Mammary epithelial cell (primary cell): ENCODE measurements at regions of chr15 and their contacts with region 1.

Region 1: GRCh38 chr15:73633111-73633990 is at the start of gene NPTN:
- DNase-seq: peak; percentile 98
- H3K4me3 ChIP-seq: peak within 1 kb of the TSS; percentile 59 to 78 (median 74)
- H3K27ac ChIP-seq: peak within 1 kb of the TSS; percentile 96
- H3K4me1 ChIP-seq: peaks cover 58% of the 10 kb centered on the region
- H3K27me3 ChIP-seq: no peaks in the 10 kb centered on the region
- CTCF ChIP-seq: no peak
- total RNA-seq, gene NPTN: 118 to 143 TPM

Region 2: GRCh38 chr15:73305331-73306211 is 327.8 kb before region 1 on chr15:
- CTCF ChIA-PET with region 1: no interaction called
- dilution Hi-C with region 1: no loop called
- in situ Hi-C with region 1: no loop called
- intact Hi-C with region 1: loop called (anchors 1 kb)
- DNase-seq: peak; percentile 75
- H3K4me3 ChIP-seq: no peak overlapping the region
- H3K27ac ChIP-seq: no peak overlapping the region
- H3K4me1 ChIP-seq: peaks cover 7% of the 10 kb centered on the region
- H3K27me3 ChIP-seq: no peaks in the 10 kb centered on the region
- CTCF ChIP-seq: peak; percentile 77 to 83

Region 3: DNA sequence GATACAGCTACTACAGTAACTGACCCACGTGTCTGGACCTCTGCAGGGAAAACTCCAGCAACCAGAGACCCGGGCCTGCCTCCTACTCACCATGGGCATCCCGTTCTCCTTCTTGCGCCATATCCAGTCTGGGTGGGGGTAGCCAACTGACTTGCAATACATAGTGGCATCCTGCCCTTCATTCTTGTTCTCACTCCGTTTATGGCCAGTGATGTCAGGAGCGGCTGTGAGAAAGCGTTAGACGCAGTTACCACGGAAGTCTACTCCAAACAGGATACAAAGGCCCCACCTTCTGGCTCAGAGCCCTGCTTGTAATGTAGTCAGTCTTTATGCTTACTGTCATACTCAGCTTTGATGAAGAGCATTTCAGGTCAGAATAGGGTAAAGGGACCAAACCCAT is 59.8 kb before region 1 on chr15:
- CTCF ChIA-PET with region 1: interaction called, 8 read pairs
- dilution Hi-C with region 1: no loop called
- in situ Hi-C with region 1: loop called in 1 of 2 experiments (anchors 10 kb)
- intact Hi-C with region 1: loop called (anchors 5 kb)
- DNase-seq: peak; percentile 64
- H3K4me3 ChIP-seq: no peak overlapping the region
- H3K27ac ChIP-seq: no peak overlapping the region
- H3K4me1 ChIP-seq: peaks cover 48% of the 10 kb centered on the region
- H3K27me3 ChIP-seq: no peaks in the 10 kb centered on the region
- CTCF ChIP-seq: no peak

Region 4: GRCh38 chr15:73589766-73590165 is 43.6 kb before region 1 on chr15:
- CTCF ChIA-PET with region 1: no interaction called
- dilution Hi-C with region 1: no loop called
- in situ Hi-C with region 1: no loop called
- intact Hi-C with region 1: no loop called
- DNase-seq: no peak
- H3K4me3 ChIP-seq: no peak overlapping the region
- H3K27ac ChIP-seq: no peak overlapping the region
- H3K4me1 ChIP-seq: no peaks in the 10 kb centered on the region
- H3K27me3 ChIP-seq: no peaks in the 10 kb centered on the region
- CTCF ChIP-seq: no peak

Region 5: DNA sequence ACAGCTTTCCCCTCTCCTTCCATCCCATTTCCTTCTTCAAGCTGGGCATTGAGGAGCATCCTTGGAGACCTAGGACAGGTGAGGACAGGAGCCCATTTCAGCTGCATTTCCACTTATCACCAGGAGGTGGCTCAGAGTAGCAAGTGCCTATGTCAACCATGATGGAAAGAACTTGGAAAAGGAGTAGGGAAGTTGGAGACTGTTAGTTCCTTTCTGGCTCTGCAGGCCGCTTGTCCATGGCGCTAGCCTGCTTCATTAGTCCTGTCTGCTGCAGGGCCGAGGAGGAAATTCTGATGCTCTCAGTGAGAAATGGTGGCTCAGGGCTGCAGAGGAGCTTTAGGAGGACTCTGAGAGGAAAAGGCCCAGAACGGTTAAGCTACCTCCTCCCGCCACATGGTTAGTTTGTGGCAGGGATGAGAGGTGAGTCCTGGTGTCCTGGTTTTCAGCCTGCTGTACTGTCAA is 43.8 kb after region 1 on chr15:
- CTCF ChIA-PET with region 1: no interaction called
- dilution Hi-C with region 1: no loop called
- in situ Hi-C with region 1: no loop called
- intact Hi-C with region 1: loop called (anchors 1 kb)
- DNase-seq: peak; percentile 55
- H3K4me3 ChIP-seq: no peak overlapping the region
- H3K27ac ChIP-seq: no peak overlapping the region
- H3K4me1 ChIP-seq: no peaks in the 10 kb centered on the region
- H3K27me3 ChIP-seq: no peaks in the 10 kb centered on the region
- CTCF ChIP-seq: peak; percentile 88 to 89

Region 6: DNA sequence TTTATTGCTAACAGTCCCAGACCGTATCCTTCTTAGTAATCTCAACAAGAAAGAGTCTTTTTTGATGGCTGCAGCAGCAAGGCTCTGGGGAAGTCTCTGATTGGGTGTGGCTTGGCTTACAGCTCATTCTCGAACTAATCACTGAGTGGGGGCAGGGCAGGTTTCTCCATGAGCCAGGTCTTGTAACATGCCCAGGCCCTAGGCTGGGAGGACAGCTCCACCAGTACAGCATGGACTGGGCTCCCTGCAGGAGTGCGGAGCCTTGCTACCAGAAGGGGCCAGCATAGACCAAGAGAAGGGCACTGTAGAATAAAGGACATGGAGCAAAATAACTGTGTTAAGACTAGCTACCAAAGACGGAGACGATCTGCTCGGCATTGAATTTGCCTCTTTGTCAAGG is 58.0 kb after region 1 on chr15:
- CTCF ChIA-PET with region 1: interaction called, 7 read pairs
- dilution Hi-C with region 1: loop called (anchors 5 kb)
- in situ Hi-C with region 1: loop called (anchors 5 kb)
- intact Hi-C with region 1: no loop called
- DNase-seq: peak; percentile 80
- H3K4me3 ChIP-seq: no peak overlapping the region
- H3K27ac ChIP-seq: no peak overlapping the region
- H3K4me1 ChIP-seq: peaks cover 60% of the 10 kb centered on the region
- H3K27me3 ChIP-seq: no peaks in the 10 kb centered on the region
- CTCF ChIP-seq: peak in 1 of 2 donors; percentile 21

Region 7: DNA sequence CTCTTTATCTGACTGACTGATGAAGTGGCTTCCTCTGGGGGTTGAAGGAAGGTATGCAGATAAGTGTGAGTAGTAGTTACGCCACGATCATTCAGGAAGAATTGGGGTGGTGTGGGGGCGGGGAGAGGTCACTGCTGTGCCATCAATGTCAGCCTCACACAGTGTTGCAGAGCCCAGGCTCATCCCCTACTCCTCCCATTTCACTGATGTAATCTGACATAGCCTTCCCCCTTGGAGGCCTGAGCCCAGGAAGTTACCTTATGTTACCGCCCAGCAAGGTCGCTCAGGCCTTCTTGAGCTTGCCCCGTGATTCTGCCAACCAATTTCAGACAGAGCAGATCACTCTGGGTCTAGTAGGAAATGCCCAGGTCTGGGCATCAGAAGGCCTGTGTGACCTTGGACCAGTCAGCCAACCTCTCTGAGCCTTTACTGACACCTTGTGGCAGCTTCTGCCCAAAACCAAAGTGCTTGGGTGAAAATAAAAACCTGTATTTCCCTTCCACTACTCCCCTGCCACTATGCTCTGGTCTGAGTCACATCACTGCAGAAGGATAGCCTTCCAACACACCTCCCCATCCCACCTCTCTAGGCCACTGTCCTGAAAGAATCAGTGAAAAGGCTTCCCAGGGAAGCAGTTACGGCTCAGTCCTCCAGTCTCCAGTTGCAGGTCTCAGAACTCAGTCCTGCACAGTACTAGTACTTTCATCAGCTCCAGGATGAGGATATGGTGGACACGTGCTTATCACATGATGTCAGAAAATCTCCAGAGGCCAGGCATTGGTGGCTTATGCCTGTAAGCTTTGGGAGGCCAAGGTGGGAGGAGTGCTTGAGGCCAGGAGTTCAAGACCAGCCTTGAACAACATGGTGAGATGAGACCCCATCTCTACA is 147.9 kb after region 1 on chr15:
- CTCF ChIA-PET with region 1: no interaction called
- dilution Hi-C with region 1: no loop called
- in situ Hi-C with region 1: no loop called
- intact Hi-C with region 1: loop called (anchors 1 kb)
- DNase-seq: peak; percentile 34
- H3K4me3 ChIP-seq: no peak overlapping the region
- H3K27ac ChIP-seq: no peak overlapping the region
- H3K4me1 ChIP-seq: peaks cover 13% of the 10 kb centered on the region
- H3K27me3 ChIP-seq: no peaks in the 10 kb centered on the region
- CTCF ChIP-seq: peak; percentile 38 to 54